ENCODE measurements at regions of chr17 and their contacts with region 1.

Region 1: DNA sequence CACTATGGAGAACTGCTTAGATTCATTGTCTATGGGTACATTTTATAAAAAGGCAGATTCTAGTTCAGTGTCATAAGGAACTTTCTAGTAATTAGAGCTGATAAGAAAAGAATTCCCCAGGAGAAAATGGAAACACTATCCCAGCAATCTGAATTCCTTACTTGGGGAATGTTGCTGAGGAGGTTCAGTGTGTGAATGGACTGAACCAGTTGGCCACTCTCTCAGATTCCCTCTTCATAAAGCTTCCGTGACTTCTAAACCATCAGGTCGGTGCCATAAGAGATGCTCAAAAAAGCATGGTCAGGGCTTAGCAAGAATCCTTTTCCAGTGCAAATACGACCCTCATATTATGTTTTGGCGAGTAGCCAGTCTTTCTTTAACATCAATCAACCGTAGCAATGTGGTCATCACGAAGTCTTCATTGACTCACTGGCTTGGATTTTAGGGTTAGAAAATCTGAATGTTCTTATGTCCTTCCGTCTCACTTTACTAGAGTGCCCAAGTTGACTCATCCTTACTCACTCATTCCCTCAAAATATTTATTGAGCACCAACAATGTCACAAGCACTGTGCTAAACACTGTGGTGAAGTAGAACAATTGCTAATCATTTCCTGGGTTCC is 102.7 kb upstream of the HLF start:
- DNase-seq: no peak
- H3K4me3 ChIP-seq: no peak overlapping the region
- H3K27ac ChIP-seq: no peak overlapping the region; the same call in 1 of the 2 replicates
- H3K4me1 ChIP-seq: no peaks in the 10 kb centered on the region
- H3K27me3 ChIP-seq: no peaks in the 10 kb centered on the region
- CTCF ChIP-seq: no peak
- EP300 ChIP-seq: no peak
- POLR2A ChIP-seq: no peak
- RAD21 ChIP-seq: no peak

Region 2: GRCh38 chr17:55177159-55177854 is 15.3 kb after region 1 on chr17:
- CTCF ChIA-PET with region 1: interaction called, 12 read pairs
- POLR2A ChIA-PET with region 1: no interaction called
- DNase-seq: no peak
- H3K4me3 ChIP-seq: no peak overlapping the region
- H3K27ac ChIP-seq: no peak overlapping the region
- H3K4me1 ChIP-seq: no peaks in the 10 kb centered on the region; a peak in 1 of 7 replicates
- H3K27me3 ChIP-seq: no peaks in the 10 kb centered on the region
- CTCF ChIP-seq: peak; percentile 54 to 65 (median 55)
- EP300 ChIP-seq: no peak
- POLR2A ChIP-seq: no peak
- RAD21 ChIP-seq: peak; percentile 50 to 64